Kidney (tissue), 22 donors: ENCODE measurements at regions of chr17 and their contacts with region 1.

Region 1: GRCh38 chr17:73166731-73167581 is 2.1 kb downstream of the SSTR2 start:
- DNase-seq: no peak
- H3K4me3 ChIP-seq: peak overlapping the region in 2 of 3 donors; percentile 74 to 86
- H3K27ac ChIP-seq: peak overlapping the region; percentile 41 to 42
- H3K4me1 ChIP-seq: peaks cover 0 to 13% (median 0%) of the 10 kb centered on the region in 3 donors
- H3K27me3 ChIP-seq: peaks cover 37% of the 10 kb centered on the region
- CTCF ChIP-seq: no peak

Region 2: DNA sequence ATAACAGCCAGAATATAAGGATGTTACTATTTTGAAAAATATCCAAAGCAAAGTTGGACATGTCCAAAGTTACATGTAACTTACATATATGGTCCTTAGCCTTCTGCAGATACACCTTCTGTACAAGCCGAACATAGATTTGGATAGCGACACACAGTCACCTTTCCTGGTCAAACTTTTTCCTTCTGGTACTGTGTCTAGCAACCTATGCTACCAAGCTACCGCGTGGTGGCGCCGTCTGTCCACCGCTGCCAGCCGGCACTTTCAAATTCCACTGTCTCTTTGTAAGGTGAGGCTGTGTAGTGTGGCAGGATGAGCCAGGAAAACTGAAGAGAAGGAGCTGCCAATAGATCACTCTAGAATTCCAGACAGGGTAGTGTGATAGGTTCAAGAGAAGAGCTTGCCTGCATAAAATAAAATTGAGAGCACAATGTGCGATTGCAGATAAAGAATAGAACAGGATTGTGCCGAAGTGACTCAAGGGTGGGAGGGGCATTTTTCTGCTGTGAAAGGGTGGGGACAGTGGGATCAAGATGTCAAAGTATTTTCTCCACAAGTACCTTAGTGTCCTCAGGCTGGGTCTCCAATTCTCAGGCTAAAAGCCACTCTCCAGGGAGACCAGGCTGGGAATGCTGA is 441.4 kb before region 1 on chr17:
- intact Hi-C with region 1: loop called (anchors 10 kb)
- DNase-seq: peak in 4 of 5 donors; percentile 69 to 80 (median 76)
- H3K4me3 ChIP-seq: no peak overlapping the region
- H3K27ac ChIP-seq: no peak overlapping the region
- H3K4me1 ChIP-seq: no peaks in the 10 kb centered on the region
- H3K27me3 ChIP-seq: no peaks in the 10 kb centered on the region
- CTCF ChIP-seq: peak; percentile 90

Region 3: GRCh38 chr17:72985881-72986720 is 180.9 kb before region 1 on chr17:
- intact Hi-C with region 1: no loop called
- DNase-seq: peak in 4 of 5 donors; percentile 76 to 87 (median 82)
- H3K4me3 ChIP-seq: no peak overlapping the region
- H3K27ac ChIP-seq: no peak overlapping the region
- H3K4me1 ChIP-seq: no peaks in the 10 kb centered on the region
- H3K27me3 ChIP-seq: no peaks in the 10 kb centered on the region
- CTCF ChIP-seq: peak; percentile 81

Region 4: DNA sequence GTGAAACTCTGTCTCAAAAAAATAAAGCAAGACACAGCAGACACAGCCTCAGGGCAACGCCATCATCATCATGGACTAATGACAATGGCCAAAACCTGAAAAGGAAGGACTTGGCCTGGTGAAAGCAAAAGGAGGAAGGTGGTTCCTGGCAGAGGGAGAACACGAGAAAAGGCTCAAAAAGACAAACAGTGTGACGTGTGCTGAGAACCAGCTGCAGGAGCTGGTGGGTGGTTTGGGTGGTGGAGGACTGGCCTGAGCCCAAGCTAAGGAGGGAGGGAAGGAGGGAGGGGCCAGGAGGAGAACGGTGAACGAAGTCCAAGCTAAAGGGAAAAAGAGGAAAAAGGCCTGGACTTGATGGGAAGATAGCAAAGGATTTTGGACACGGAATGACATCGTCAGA is 159.5 kb before region 1 on chr17:
- intact Hi-C with region 1: no loop called
- DNase-seq: no peak
- H3K4me3 ChIP-seq: no peak overlapping the region
- H3K27ac ChIP-seq: peak overlapping the region; percentile 3 to 26
- H3K4me1 ChIP-seq: no peaks in the 10 kb centered on the region
- H3K27me3 ChIP-seq: no peaks in the 10 kb centered on the region
- CTCF ChIP-seq: no peak